Posterior cingulate gyrus (tissue), 11 donors: ENCODE measurements at regions of chr13 and their contacts with region 1.

Region 1: GRCh38 chr13:33228648-33229445 is 56.7 kb downstream of the STARD13 start:
- DNase-seq: no peak

Region 2: GRCh38 chr13:33262062-33262497 is 33.2 kb after region 1 on chr13:
- intact Hi-C with region 1: no loop called
- DNase-seq: peak in 5 of 10 donors; percentile 31 to 86 (median 70)

Region 3: DNA sequence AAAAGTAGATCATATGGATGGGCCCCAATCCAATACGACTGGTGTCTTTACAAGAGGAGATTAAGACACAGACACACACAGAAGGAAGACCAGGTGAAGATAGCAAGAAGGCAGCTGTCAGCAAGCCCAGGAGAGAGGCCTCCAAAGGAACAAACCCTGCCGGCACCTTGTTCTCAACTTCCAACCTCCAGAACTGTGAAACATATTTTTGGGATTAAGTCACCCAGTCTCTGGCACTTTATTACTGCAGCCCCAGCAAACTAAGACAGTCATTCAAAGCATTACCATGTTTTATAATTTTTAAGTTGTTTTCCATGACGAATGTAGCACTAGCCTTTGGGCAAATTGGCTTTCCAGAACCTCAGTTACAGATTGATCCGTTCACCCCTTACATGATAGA is 45.4 kb after region 1 on chr13:
- intact Hi-C with region 1: no loop called
- DNase-seq: no peak

Region 4: DNA sequence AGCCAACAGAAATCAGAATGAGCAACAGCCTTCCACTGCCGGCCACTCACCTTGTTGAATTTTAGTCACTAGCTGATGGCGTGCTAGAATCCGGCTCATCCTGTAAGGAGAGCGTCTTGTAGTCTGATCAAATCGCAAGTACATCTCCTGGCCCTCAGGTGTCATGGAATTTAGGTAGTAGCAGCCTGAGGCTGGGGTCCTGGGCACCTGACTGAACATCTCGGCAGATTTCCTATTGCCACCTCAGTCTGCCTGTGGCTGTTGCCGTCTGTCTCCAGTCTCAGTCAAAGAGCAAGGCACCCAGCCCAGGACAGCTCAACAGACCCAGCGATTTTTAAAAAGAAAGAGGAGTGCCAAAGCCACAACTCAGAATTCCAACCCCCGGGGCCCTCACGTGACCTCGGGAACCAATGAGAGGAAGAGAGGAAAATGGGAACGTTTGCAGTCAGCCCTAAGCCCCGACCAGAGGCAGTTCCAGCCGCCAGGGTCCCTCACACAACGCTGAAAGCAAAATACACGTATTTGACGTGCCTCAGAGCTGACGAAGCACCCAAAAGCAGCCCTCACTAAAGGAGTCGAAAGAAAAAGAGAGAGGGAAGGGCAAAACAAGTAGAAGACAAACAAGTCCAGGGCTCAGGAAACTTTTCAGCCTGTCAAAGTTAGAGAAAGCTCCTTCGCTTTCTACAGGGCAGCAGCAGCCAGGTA is 56.7 kb after region 1 on chr13 and contains the start of gene STARD13:
- intact Hi-C with region 1: loop called (anchors 2 kb)
- DNase-seq: peak; percentile 87 to 98 (median 90)

Region 5: DNA sequence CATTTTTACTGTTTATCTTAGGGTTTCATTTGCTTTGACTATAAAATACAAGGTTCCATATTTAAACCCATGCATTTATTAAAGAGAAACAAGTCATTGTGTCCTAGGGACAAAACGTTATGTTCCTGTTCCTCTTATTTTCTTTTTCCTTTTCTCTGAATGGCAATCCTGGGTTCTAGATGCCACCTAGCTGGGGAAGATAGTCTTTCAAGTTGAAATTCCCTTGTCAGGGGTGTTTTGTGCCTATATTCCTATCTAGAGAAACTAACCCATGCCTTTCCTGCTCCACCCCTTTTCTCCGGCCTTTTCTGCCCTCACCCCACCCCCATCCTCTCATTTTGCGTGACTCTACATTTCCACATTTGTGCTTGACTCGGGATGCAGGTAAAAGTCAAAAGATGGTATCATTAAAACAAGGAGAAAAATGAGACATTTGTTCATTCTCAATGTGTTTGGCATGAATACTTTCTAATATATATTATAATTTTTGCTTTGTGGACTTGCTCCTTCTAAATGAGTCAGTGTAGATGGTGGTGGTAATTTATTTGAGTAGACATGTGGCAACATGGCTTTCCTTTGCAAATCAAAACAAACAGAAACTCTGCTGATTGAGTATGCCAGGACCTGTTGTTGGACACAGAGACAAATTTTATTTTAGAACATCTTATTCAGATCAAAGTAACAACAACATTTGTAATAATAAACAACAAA is 83.5 kb after region 1 on chr13:
- intact Hi-C with region 1: loop called (anchors 2 kb)
- DNase-seq: peak in 1 of 10 donors; percentile 52

Region 6: DNA sequence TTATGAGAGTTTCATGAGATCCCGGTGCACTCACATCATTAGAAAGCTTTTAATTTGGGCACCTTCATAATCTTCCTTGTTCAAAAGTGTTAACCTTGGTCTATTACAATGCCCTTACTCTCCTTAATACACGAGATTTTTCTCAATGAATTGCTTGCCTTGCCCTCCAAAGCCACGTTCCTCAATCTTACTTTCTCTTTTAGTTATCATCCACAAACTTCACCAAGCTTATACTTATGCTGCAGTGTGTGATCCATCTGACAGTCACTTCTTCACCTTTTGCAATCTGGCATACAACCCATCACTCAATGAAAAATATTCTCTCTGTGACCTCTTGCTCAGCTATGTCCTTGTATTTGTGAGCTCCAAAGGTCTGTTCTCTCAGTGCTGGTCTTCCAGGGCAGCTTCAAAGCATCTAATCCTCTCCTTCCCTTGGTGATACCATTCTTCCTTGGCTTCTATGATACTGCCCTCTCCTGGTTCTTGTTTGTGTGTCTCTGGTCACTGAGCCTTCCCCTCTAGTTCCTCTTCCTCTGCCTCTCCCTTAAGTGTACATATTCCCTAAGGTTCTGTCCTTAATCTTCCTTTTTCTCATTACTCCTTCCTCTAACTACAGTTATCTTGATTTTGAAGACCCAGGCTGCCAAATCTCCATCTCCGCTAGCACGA is 258.9 kb after region 1 on chr13:
- intact Hi-C with region 1: loop called (anchors 2 kb)
- DNase-seq: peak in 1 of 10 donors; percentile 9

Region 7: DNA sequence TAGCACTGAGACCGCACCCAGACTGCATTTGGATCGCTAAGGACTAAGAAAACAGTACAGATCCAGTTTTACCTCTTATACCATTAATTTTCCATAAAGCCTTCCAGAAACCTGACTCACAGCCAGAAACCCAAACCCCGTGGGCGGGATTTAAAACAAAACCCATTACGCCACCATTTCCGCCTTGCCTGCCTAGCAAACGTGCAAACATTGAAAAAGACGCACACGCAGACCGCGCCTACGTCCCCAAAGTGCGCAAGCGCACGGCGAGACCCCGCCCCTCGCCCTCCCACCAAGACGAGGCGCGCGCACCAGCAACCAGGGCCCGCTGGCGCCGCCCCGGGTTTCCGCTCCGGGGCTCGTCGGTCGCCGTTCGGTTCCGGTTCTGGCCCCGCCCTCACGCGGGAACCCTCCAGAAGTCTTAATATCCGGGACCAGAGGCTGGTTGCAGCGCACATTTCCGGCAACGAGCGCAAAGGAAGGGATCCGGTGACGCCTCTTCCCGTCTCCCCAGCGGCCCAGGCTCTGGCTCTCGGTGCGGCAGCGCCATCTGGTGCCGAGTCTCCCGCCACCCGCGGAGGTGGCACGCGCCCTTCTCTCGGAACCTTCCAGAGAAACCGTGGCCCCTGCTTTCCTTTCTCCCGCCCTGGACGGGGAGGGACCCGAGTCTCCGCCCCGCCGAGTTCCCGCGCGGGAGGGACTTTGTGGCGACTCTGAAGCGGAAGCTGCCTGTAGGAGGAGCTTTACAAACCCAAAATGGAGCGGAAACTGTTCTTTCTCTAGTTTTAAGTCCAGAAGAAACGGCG is 313.6 kb after region 1 on chr13:
- intact Hi-C with region 1: loop called (anchors 2 kb)
- DNase-seq: peak; percentile 94 to 99 (median 96)

Region 8: DNA sequence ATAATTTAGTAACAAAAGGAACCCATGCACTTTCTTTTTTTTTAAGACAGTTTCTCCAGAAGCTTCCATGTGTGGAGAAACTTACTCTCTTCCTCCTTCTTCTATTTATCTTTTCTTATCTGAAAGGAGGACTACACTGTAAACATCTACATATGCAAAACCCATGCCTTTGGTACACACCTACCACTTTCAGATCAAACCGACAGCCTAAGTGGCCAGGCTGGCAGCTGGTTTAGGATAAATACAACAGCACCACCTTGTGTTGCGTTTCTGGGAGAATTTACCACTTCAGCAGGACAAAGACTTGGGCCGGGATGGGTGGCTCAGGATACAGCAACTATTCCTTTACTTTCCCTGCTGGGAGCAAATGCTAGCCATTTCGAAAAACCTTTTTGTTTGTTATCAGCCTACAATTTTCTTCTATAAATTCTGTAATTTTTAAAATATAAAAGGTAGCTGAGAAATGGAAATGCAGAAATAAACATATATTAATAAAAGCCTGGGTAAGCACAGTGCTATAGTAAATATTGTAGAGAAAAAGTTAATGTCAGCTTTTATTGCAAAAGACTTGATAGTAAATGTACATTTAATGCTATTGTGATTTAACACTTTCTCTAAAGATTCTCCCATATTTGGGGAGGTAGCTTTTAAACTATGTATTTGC is 495.1 kb after region 1 on chr13:
- intact Hi-C with region 1: loop called (anchors 10 kb)
- DNase-seq: peak; percentile 51 to 94 (median 77)